ENCODE measurements at regions of chr5 and their contacts with region 1.

Region 1: DNA sequence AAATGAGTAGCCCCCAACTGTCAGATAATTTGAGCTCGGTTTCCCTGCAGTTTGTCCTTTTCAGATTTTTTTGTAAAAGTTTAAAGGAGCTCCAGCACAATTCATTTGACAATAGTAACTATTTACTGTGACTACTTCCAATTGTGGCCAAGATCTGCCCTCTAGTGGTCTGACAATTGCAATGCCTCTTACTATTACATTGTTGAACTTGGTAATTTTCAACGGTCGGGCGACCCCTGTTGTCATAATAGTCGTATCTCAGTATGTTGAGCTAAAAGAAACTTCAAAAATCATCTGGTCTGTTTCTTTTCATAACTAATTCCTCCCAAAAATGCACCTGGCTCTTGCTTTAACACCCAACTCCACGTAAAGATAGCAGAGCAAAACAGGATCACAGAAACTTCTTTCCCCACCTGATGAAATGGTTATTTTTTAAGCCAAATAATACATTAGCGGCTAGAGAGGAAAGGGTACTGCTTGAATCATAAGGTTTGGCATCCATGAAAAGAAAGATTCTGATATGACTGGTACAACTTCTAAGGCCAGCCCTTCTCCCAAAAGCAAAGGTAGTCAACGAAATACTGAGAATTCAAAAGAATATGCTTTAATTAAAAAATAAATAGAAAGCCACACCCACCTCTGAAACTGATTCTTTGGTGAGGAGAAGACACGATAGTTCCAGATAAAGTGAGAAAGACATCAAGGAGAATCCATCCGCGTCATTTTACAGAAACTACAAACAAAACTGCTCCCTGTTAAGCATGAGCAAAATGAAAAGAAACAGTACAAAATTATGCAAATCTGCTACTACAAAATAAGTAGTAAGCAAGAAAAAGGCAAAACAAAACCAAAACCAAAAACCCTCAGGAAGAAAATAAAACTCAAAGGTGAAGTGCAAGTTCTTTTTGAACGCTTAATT is 76.9 kb upstream of the HTR4 start:
- DNase-seq: peak; percentile 87
- H3K4me3 Mint-ChIP-seq: no peak overlapping the region
- H3K27ac Mint-ChIP-seq: no peak overlapping the region
- H3K4me1 Mint-ChIP-seq: peaks cover 2% of the 10 kb centered on the region
- H3K27me3 Mint-ChIP-seq: peaks cover 3% of the 10 kb centered on the region

Region 2: GRCh38 chr5:148290271-148291195 is 440.7 kb before region 1 on chr5:
- CTCF ChIA-PET with region 1: interaction called, 4 read pairs
- intact Hi-C with region 1: loop called (anchors 1 kb)
- DNase-seq: no peak
- H3K4me3 Mint-ChIP-seq: no peak overlapping the region
- H3K27ac Mint-ChIP-seq: no peak overlapping the region
- H3K4me1 Mint-ChIP-seq: no peaks in the 10 kb centered on the region
- H3K27me3 Mint-ChIP-seq: no peaks in the 10 kb centered on the region

Region 3: GRCh38 chr5:148437249-148437648 is 294.0 kb before region 1 on chr5:
- CTCF ChIA-PET with region 1: interaction called, 111 read pairs
- intact Hi-C with region 1: no loop called
- DNase-seq: no peak
- H3K4me3 Mint-ChIP-seq: peak overlapping the region; percentile 37
- H3K27ac Mint-ChIP-seq: peak overlapping the region; percentile 80
- H3K4me1 Mint-ChIP-seq: peaks cover 5% of the 10 kb centered on the region
- H3K27me3 Mint-ChIP-seq: no peaks in the 10 kb centered on the region

Region 4: DNA sequence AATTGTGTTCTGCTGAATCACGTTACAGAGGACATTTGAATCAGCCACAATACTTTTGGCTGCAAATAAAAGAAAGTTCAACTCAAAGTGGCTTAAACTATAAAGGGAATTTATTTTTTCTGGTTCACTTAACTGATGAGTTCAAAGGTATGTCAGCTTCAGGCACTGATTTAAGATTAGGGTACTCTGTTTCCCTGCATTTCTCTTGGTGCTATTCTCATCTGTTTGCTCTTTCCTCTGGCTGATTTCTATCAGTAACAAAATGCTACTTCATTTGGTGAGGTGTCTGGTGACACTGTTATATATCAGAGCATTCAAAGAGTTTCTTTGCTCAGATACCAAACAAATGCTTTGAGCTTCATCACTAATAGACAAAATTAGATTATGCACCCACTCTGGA is 11.0 kb before region 1 on chr5:
- CTCF ChIA-PET with region 1: interaction called, 17 read pairs
- intact Hi-C with region 1: no loop called
- DNase-seq: no peak
- H3K4me3 Mint-ChIP-seq: no peak overlapping the region
- H3K27ac Mint-ChIP-seq: no peak overlapping the region
- H3K4me1 Mint-ChIP-seq: no peaks in the 10 kb centered on the region
- H3K27me3 Mint-ChIP-seq: peaks cover 31% of the 10 kb centered on the region

Region 5: DNA sequence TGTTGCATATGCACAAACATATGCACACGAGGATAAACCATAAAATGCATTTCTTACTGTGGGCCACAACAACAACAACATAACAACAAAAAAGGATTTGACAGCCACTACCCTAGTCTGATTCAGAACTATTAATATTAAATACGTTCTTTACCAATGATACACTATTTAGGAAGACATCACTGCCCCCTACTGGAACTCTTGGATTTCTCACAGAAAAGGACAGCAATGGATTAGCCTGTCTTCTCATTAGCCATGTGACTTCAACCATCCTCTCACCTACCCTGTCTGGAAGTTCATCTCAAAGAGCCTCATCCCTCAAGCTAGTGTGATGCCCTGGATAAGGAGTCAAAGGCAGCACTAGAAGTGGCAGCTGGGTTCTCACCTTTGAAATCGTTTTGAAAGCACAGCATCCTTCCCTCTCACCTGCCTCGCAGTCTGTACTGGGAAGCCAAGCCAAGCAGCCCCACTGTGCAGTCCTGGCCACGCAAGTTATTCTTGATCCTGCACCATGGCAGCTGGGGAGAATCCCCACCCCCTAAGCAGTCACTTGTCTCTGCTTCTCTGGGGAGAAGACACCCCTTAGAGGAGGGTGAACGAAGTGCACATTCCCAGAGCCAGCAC is 267.1 kb after region 1 on chr5:
- CTCF ChIA-PET with region 1: interaction called, 72 read pairs
- intact Hi-C with region 1: loop called (anchors 1 kb)
- DNase-seq: peak; percentile 37
- H3K4me3 Mint-ChIP-seq: no peak overlapping the region
- H3K27ac Mint-ChIP-seq: no peak overlapping the region
- H3K4me1 Mint-ChIP-seq: no peaks in the 10 kb centered on the region
- H3K27me3 Mint-ChIP-seq: peaks cover 28% of the 10 kb centered on the region

Region 6: GRCh38 chr5:149583394-149583793 is 852.2 kb after region 1 on chr5:
- CTCF ChIA-PET with region 1: no interaction called
- intact Hi-C with region 1: no loop called
- DNase-seq: no peak
- H3K4me3 Mint-ChIP-seq: no peak overlapping the region
- H3K27ac Mint-ChIP-seq: no peak overlapping the region
- H3K4me1 Mint-ChIP-seq: peaks cover 29% of the 10 kb centered on the region
- H3K27me3 Mint-ChIP-seq: no peaks in the 10 kb centered on the region